ENCODE measurements at regions of chr9 and their contacts with region 1.

Region 1: DNA sequence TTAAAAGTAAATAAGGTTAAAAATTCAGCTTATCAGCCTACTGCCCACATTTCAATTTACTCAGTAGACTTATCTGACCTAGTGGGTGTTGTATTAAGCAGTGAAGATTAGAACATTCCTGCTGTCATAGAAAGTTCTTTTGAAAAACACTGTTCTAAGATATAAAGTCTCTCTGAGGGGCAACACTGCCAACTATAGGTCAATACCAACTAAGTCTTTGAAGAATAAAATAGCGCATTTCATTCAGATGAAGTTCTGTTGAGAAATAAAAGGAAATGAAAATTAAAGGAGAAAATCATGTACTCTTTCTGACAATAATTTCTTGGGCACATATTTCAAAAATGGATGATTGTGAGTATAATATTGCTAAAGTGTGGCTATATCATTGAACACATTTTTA is 86.8 kb downstream of the PTPRD start:
- DNase-seq: no peak
- H3K4me3 ChIP-seq: no peak overlapping the region
- H3K27ac ChIP-seq: no peak overlapping the region
- H3K4me1 ChIP-seq: no peaks in the 10 kb centered on the region
- H3K27me3 ChIP-seq: no peaks in the 10 kb centered on the region
- CTCF ChIP-seq: no peak

Region 2: GRCh38 chr9:10594482-10594881 is 68.5 kb after region 1 on chr9:
- intact Hi-C with region 1: no loop called
- DNase-seq: no peak
- H3K4me3 ChIP-seq: no peak overlapping the region
- H3K27ac ChIP-seq: no peak overlapping the region
- H3K4me1 ChIP-seq: no peaks in the 10 kb centered on the region
- H3K27me3 ChIP-seq: no peaks in the 10 kb centered on the region
- CTCF ChIP-seq: no peak

Region 3: DNA sequence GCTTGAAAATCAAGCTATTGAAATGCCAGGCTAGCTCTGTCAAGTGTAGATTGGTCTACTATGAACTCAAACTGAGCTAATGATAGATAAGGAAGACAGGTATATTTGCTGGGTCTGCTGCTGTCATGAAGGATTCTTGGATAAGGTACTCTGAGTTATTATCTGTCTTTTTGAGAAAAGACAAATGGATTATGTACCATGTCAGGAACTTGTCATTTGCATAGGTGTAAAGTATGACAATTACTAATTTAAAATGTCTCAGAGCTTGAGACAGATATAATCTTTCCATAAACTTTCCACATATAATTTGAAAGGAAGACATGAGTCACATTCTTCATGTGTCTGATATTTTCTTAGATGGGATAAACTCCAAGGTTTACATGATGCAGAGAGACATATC is 681.0 kb after region 1 on chr9:
- intact Hi-C with region 1: loop called (anchors 10 kb)
- DNase-seq: no peak
- H3K4me3 ChIP-seq: no peak overlapping the region
- H3K27ac ChIP-seq: no peak overlapping the region
- H3K4me1 ChIP-seq: no peaks in the 10 kb centered on the region
- H3K27me3 ChIP-seq: no peaks in the 10 kb centered on the region
- CTCF ChIP-seq: no peak

Measured in tibial artery (tissue), 4 donors.